Activated CD4-positive, alpha-beta memory T cell treated with anti-CD3 and anti-CD28 coated beads for 36 hours (primary cell): ENCODE measurements at regions of chr5 and their contacts with region 1.

Region 1: DNA sequence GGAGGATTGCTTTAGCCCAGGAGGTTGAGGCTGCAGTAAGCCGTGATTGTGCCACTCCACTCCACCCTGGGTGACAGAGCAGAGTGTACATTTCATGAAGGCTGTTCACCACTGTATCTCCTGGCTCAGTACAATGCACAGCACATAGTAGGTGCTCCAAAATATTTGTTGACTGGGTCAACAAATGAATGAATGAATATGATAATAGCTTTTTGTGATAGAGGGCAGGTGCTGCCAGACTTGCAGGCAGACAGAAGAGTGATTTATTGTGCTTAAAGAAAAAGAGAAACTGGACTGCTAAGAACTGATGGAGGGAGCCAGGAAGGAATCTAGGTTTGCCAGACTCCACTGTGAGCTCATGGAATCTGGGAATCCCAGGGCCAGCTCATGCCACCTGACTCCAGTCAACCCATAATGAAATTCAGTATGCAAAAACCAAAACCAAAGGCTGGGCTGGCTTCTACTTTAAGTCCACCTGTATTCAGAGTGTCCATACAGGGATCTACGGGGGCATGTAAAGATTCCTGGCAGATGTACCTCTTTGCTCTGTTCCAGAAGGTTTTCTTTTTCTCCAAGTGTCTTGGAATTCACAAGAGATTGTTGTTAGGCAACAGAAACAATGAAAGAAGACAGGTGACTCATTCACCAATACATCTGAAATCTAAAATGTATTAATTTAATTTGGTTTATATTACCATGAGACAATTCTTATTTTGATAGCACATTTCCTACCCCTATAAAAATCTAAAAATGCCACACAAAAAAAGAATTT is 15.5 kb upstream of the CTNNA1 start:
- DNase-seq: no peak
- H3K4me3 Mint-ChIP-seq: no peak overlapping the region
- H3K27ac Mint-ChIP-seq: no peak overlapping the region
- H3K4me1 Mint-ChIP-seq: peaks cover 21% of the 10 kb centered on the region
- H3K27me3 Mint-ChIP-seq: peaks cover 2% of the 10 kb centered on the region

Region 2: GRCh38 chr5:138654281-138654867 is 83.3 kb before region 1 on chr5:
- CTCF ChIA-PET with region 1: no interaction called
- POLR2A ChIA-PET with region 1: no interaction called
- intact Hi-C with region 1: loop called (anchors 1 kb)
- DNase-seq: peak; percentile 83
- H3K4me3 Mint-ChIP-seq: peak overlapping the region; percentile 16
- H3K27ac Mint-ChIP-seq: peak overlapping the region; percentile 26
- H3K4me1 Mint-ChIP-seq: peaks cover 23% of the 10 kb centered on the region
- H3K27me3 Mint-ChIP-seq: peaks cover 74% of the 10 kb centered on the region